Naive thymus-derived CD4-positive, alpha-beta T cell (primary cell): ENCODE measurements at regions of chr2 and their contacts with region 1.

Region 1: DNA sequence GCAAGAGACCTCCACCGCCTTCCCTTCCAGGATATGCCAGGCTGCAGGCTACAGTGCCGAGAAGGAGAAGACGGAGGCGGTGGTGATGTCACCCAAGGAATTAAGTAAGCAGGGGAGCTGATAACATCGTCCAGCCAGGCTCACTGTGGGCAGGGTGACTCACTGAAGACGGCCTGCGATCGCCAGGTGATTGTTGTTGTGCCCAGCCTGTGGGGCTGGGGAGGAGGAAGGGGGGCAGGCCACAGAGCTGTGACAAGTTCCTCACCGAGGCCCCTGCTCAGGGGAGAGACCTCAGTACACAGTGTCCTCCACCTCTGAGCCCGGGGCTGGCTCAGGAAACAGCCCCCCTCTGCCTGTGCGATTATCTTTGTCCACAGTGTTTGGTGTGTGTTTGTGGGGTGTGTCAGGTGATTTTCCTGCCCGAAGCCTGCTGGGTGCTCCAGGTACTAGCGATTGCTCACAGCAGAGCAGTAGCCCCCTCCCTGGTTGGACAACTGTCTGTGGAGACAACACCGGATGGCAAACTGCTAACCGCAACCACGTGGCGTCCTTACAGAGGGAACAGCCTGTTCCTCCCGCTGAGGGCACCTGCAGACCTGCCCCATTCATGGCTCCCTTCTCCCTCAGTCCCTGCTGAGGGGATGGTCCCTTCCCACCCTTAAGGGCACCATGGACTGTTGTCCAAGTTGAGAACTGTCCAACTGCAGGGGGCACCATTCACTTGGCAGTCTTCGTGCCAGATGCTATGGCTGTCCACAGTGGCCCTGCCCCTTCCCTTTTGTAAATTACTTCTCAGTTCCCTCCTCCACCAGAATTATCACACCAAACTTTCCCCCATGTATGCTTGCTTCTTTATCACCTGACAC is 95.1 kb downstream of the ZFP36L2 start:
- DNase-seq: peak; percentile 44 to 92 (median 82)
- ATAC-seq: peak; percentile 60
- H3K4me3 ChIP-seq: peak overlapping the region; percentile 51
- H3K4me3 Mint-ChIP-seq: peak overlapping the region; percentile 36 to 86 (median 68)
- H3K27ac ChIP-seq: peak overlapping the region; percentile 96
- H3K27ac Mint-ChIP-seq: peak overlapping the region; percentile 88 to 100 (median 98)
- H3K4me1 ChIP-seq: peaks cover 90 to 92% of the 10 kb centered on the region in 2 donors
- H3K4me1 Mint-ChIP-seq: peaks cover 67 to 89% (median 85%) of the 10 kb centered on the region in 7 donors
- H3K27me3 ChIP-seq: no peaks in the 10 kb centered on the region
- H3K27me3 Mint-ChIP-seq: no peaks in the 10 kb centered on the region

Region 2: GRCh38 chr2:42974721-42975717 is 156.2 kb before region 1 on chr2:
- CTCF ChIA-PET with region 1: interaction called, 3 read pairs
- POLR2A ChIA-PET with region 1: interaction called, 4 read pairs
- intact Hi-C with region 1: loop called (anchors 2 to 5 kb)
- DNase-seq: peak; percentile 25 to 64 (median 47)
- ATAC-seq: peak; percentile 70
- H3K4me3 ChIP-seq: no peak overlapping the region
- H3K4me3 Mint-ChIP-seq: no peak overlapping the region
- H3K27ac ChIP-seq: no peak overlapping the region
- H3K27ac Mint-ChIP-seq: peak overlapping the region in 3 of 9 donors; percentile 25 to 74 (median 41)
- H3K4me1 ChIP-seq: peaks cover 0 to 6% of the 10 kb centered on the region in 2 donors
- H3K4me1 Mint-ChIP-seq: peaks cover 12 to 19% (median 16%) of the 10 kb centered on the region in 7 donors
- H3K27me3 ChIP-seq: no peaks in the 10 kb centered on the region
- H3K27me3 Mint-ChIP-seq: peaks cover 0 to 10% (median 0%) of the 10 kb centered on the region in 5 donors

Region 3: DNA sequence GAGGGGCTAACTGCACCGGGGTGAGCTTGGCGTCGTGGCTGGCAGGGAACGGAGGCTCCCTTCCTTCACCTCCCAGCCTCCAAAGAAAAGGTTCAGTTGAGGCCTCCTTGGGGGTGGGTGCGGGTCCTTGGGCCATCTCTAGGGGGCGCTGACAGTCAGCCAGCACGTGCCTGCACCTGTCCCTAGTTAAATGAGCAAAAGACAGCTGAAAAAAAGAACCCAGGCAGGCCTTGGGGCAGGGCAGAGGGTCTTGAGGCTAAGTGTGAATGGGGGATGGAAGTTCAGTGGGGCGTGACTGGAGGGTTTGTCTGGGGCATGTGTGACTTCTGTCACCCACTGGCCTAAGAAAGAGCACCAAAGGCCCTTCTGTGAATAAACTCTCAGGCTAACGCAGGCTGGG is 38.7 kb after region 1 on chr2:
- CTCF ChIA-PET with region 1: interaction called, 39 read pairs
- POLR2A ChIA-PET with region 1: interaction called, 1,274 read pairs
- intact Hi-C with region 1: loop called (anchors 1 kb)
- DNase-seq: peak in 8 of 9 donors; percentile 51 to 74 (median 64)
- ATAC-seq: peak; percentile 26
- H3K4me3 ChIP-seq: peak overlapping the region; percentile 35
- H3K4me3 Mint-ChIP-seq: peak overlapping the region; percentile 68 to 91 (median 84)
- H3K27ac ChIP-seq: peak overlapping the region; percentile 99
- H3K27ac Mint-ChIP-seq: peak overlapping the region; percentile 94 to 100 (median 98)
- H3K4me1 ChIP-seq: peaks cover 64 to 70% of the 10 kb centered on the region in 2 donors
- H3K4me1 Mint-ChIP-seq: peaks cover 52 to 89% (median 76%) of the 10 kb centered on the region in 7 donors
- H3K27me3 ChIP-seq: no peaks in the 10 kb centered on the region
- H3K27me3 Mint-ChIP-seq: no peaks in the 10 kb centered on the region

Region 4: GRCh38 chr2:43219383-43220228 is 88.3 kb after region 1 on chr2:
- CTCF ChIA-PET with region 1: interaction called, 147 read pairs
- POLR2A ChIA-PET with region 1: interaction called, 1,771 read pairs
- intact Hi-C with region 1: loop called (anchors 1 kb)
- DNase-seq: peak; percentile 54 to 93 (median 87)
- ATAC-seq: peak; percentile 56
- H3K4me3 ChIP-seq: peak overlapping the region; percentile 87
- H3K4me3 Mint-ChIP-seq: peak overlapping the region; percentile 82 to 99 (median 90)
- H3K27ac ChIP-seq: peak overlapping the region; percentile 97
- H3K27ac Mint-ChIP-seq: peak overlapping the region; percentile 90 to 99 (median 97)
- H3K4me1 ChIP-seq: peaks cover 21% of the 10 kb centered on the region in 2 donors
- H3K4me1 Mint-ChIP-seq: peaks cover 34 to 51% (median 44%) of the 10 kb centered on the region in 7 donors
- H3K27me3 ChIP-seq: no peaks in the 10 kb centered on the region
- H3K27me3 Mint-ChIP-seq: peaks cover 0 to 2% (median 0%) of the 10 kb centered on the region in 5 donors

Region 5: DNA sequence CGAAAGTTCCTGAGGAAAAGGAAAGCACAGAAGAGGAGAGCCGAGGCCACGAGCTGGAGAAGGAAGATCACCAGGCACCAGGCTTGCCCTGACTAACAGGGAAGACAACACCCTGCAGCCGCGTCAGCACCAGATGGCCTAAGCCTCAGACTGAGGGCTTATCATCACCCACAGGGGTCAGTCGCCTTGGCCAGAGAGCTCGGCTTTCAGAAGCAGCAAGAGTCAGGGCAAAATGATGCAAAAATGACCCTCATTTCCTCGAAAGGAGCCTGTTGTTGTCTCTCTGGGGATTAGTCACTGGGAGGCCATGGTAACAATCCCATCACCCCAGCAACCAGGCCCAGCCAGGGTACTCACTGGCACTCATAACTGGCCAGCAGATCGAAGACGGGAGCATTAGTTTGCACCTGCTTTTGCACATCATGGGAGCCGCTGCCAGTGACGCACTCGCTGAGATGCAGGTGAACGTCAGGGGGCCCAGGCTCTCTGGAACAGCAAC is 137.9 kb after region 1 on chr2:
- CTCF ChIA-PET with region 1: no interaction called
- POLR2A ChIA-PET with region 1: no interaction called
- intact Hi-C with region 1: no loop called
- DNase-seq: no peak
- ATAC-seq: peak; percentile 62
- H3K4me3 ChIP-seq: no peak overlapping the region
- H3K4me3 Mint-ChIP-seq: no peak overlapping the region
- H3K27ac ChIP-seq: no peak overlapping the region
- H3K27ac Mint-ChIP-seq: no peak overlapping the region
- H3K4me1 ChIP-seq: no peaks in the 10 kb centered on the region
- H3K4me1 Mint-ChIP-seq: peaks cover 0 to 16% (median 0%) of the 10 kb centered on the region in 7 donors
- H3K27me3 ChIP-seq: no peaks in the 10 kb centered on the region
- H3K27me3 Mint-ChIP-seq: no peaks in the 10 kb centered on the region

Region 6: DNA sequence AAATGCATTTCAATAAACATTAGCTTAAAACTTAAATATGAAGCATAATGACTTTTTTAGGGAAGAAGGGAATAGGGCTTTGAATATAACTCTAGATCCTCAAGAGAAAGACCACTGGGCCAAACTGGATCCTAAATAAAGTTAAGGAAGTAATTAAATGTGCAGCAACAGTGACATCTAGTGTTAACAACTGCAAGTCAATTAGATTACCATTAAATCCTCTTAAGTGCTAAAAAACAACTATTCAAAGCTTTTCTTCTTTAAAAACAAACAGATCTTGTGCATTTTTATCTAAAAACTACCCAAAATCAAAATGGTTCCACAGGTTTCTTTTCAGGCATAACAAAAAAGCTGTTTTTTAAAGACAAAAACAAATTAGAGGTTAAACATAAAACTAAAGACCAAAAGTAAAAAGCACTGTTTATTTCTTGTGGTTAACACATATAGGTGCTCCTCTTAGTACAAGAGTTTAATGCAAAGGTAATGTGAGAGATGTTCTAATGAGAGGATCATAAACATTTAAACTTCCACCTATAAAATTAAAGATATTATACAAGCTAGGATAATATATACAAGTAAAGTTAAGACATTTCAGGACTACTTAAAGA is 353.2 kb after region 1 on chr2:
- CTCF ChIA-PET with region 1: interaction called, 4 read pairs
- POLR2A ChIA-PET with region 1: no interaction called
- intact Hi-C with region 1: loop called (anchors 1 kb)
- DNase-seq: peak in 7 of 9 donors; percentile 15 to 56 (median 47)
- ATAC-seq: peak; percentile 58
- H3K4me3 ChIP-seq: no peak overlapping the region
- H3K4me3 Mint-ChIP-seq: no peak overlapping the region
- H3K27ac ChIP-seq: no peak overlapping the region
- H3K27ac Mint-ChIP-seq: no peak overlapping the region
- H3K4me1 ChIP-seq: peaks cover 0 to 21% of the 10 kb centered on the region in 2 donors
- H3K4me1 Mint-ChIP-seq: peaks cover 0 to 15% (median 0%) of the 10 kb centered on the region in 7 donors
- H3K27me3 ChIP-seq: no peaks in the 10 kb centered on the region
- H3K27me3 Mint-ChIP-seq: no peaks in the 10 kb centered on the region

Region 7: DNA sequence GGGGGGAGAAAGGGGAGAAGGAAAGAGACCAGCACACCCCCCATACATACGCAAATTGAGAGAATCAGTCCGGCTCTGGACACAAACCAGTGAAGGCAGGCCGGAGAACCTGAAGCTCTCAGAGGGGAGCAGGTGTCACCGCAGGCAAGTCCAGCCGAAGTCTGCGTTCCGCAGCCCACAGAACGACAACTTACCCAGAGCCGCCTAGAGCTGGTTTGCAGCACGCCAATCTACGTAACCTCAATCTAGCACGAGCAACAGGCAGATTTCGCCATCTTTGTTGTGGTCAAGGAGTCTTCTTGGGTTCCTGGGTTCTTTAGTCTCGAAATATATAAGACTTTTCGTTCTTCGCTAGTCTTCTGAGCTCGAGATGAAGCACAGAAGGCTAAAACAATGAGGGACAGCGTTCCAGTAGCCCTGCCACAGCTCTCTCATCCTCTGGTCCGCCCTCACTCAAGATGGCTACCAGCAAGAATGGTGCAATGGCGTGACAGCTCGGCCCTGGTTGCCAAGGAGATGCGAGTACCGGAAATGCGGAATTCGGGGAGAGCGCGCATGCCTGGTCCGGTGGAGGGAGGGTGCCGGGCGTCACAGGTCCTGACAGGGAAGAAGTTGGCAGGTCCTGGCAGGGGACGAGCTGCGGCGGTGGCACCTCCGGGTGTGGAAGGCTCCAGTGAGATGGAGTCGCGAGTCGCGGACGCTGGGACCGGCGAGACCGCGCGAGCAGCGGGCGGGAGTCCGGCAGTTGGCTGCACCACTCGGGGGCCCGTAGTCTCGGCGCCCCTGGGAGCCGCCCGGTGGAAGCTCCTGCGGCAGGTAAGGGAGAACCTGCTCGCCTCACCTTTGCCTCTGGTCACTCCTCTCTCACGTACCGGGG is 1230.3 kb after region 1 on chr2 and contains the starts of genes CAMKMT and PREPL:
- CTCF ChIA-PET with region 1: no interaction called
- POLR2A ChIA-PET with region 1: no interaction called
- intact Hi-C with region 1: loop called in 1 of 2 experiments (anchors 10 kb)
- DNase-seq: peak; percentile 95 to 99 (median 99)
- ATAC-seq: peak; percentile 93
- H3K4me3 ChIP-seq: peak within 1 kb of the TSS; percentile 88
- H3K4me3 Mint-ChIP-seq: peak within 1 kb of the TSS; percentile 92 to 100 (median 98)
- H3K27ac ChIP-seq: peak within 1 kb of the TSS; percentile 99
- H3K27ac Mint-ChIP-seq: peak within 1 kb of the TSS; percentile 96 to 100 (median 99)
- H3K4me1 ChIP-seq: peaks cover 16 to 17% of the 10 kb centered on the region in 2 donors
- H3K4me1 Mint-ChIP-seq: peaks cover 22 to 81% (median 61%) of the 10 kb centered on the region in 7 donors
- H3K27me3 ChIP-seq: no peaks in the 10 kb centered on the region
- H3K27me3 Mint-ChIP-seq: peaks cover 0 to 3% (median 0%) of the 10 kb centered on the region in 5 donors
- total RNA-seq, gene CAMKMT: 11.1 to 20.8 (median 18.7) TPM
- total RNA-seq, gene PREPL: 22.0 to 41.9 (median 28.5) TPM